Breast epithelium (tissue), 4 donors: ENCODE measurements at regions of chr3 and their contacts with region 1.

Region 1: DNA sequence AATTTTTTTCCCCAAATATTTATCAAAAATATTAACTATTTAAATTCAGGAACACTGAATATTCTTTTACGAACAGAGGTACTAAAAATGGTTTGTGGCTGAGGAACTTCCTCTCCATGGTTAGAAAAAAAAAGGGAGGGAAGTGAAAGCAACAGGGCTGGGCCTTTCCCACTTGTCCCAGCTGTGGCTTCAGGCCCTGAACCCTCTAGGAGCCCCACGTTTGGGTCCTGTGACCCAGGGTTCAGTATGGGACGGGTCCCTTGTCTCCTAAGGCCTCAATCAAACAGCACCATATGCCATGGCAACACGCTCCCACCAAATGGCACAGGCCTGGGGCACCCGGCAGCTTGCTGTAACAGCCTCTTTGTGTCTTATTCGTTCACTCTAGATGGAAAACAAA is 32.4 kb downstream of the POC1A start:
- DNase-seq: no peak
- H3K4me3 ChIP-seq: no peak overlapping the region
- H3K27ac ChIP-seq: peak overlapping the region; percentile 4 to 21
- H3K4me1 ChIP-seq: no peaks in the 10 kb centered on the region
- H3K27me3 ChIP-seq: no peaks in the 10 kb centered on the region
- CTCF ChIP-seq: no peak
- POLR2A ChIP-seq: no peak

Region 2: DNA sequence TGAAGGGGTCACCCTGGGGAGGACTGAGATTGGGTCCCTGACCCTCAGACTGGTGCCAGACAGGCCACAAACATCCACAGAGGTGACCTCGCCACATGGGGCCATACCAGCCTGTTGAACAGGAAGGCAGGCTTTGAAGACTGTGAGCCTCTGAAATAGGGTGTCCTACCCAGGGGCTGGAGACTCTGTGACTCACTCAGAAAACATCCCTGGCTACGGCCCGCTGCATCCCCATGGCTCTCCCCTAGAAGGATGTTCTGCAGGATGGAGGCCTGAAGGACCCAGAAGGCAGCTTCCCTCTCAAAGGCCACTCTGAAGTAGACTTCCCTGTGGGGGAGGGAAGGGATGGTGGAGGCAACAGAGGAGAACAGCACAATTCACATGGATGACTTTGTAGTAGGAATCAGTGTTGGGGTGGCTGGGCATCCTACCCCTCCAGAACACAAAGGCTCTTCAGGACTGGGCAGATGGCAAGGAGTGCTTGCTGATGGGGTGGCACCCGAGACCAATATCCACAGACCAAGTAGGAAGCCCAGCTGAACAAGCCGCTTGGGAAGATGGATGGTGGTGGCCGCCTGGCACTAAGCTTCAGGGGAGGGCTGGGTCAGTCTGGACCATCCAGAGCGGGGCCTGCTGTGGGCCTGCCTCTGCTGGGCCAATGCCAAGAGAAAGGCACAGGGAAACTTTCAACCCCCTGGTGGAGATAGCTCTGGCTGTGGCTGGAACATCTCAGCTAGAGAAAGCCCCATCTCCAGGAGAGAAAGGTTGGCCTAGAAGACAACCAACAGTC is 27.9 kb before region 1 on chr3:
- intact Hi-C with region 1: loop called (anchors 1 kb)
- DNase-seq: no peak
- H3K4me3 ChIP-seq: no peak overlapping the region
- H3K27ac ChIP-seq: no peak overlapping the region
- H3K4me1 ChIP-seq: no peaks in the 10 kb centered on the region
- H3K27me3 ChIP-seq: no peaks in the 10 kb centered on the region
- CTCF ChIP-seq: no peak
- POLR2A ChIP-seq: no peak